Activated naive CD8-positive, alpha-beta T cell treated with anti-CD3 and anti-CD28 coated beads, Interleukin-2, amount 10 ng/mL, durations not matched to agents 7 days and 5 days (primary cell): ENCODE measurements at regions of chr20 and their contacts with region 1.

Region 1: GRCh38 chr20:36605399-36606157 is at the start of gene RAB5IF:
- DNase-seq: peak; percentile 99
- ATAC-seq: peak; percentile 93
- H3K4me3 Mint-ChIP-seq: peak within 1 kb of the TSS; percentile 98
- H3K27ac Mint-ChIP-seq: peak within 1 kb of the TSS; percentile 98
- H3K4me1 Mint-ChIP-seq: peaks cover 24% of the 10 kb centered on the region
- H3K27me3 Mint-ChIP-seq: no peaks in the 10 kb centered on the region
- total RNA-seq, gene RAB5IF: 73.1 to 76.1 TPM

Region 2: DNA sequence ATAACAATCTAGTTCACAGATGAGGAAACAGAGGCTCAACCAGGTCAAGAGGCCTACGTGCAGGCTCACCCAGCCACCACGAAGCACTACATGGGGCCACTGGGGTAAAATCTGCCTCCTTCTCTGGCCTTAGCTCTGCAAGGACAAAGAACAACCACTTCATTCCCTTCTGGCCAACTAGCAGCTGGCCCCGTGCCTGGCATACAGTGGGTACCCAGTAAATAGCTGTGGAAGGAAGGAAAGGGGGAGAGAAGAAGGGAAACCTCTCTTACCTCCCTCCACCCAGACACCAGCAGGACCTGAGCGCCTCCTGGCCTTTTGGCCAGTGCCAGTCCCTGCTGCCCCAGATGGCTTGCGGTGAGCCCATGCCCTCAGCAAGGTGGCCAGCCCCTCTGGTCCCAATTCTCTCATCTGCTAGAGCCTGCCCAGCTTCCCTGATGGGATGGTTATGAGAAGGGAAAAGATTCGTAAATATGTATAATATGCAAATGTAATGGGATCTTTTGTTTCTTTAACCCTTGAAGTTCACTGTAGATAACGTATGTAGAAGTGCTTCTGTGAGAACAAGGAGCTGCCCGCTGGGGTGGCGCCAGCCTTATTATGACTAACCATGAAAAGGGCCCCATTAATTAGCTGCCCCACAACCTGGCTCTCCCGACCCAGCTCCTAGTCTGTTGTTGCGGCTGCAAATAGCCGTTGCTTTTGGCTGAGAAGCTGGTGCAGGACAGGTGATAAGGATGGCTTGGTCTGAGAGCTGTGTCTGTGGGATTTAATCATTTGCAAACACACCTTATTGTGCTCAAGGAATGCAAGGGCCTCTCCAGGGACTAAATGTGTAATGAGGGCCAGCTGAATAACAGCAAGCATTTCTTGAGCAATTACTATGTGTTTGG is 237.4 kb before region 1 on chr20:
- POLR2A ChIA-PET with region 1: no interaction called
- DNase-seq: no peak
- ATAC-seq: no peak
- H3K4me3 Mint-ChIP-seq: no peak overlapping the region
- H3K27ac Mint-ChIP-seq: no peak overlapping the region
- H3K4me1 Mint-ChIP-seq: no peaks in the 10 kb centered on the region
- H3K27me3 Mint-ChIP-seq: peaks cover 2% of the 10 kb centered on the region

Region 3: GRCh38 chr20:36493013-36493800 is 112.4 kb before region 1 on chr20:
- POLR2A ChIA-PET with region 1: interaction called, 11 read pairs
- DNase-seq: no peak
- ATAC-seq: no peak
- H3K4me3 Mint-ChIP-seq: no peak overlapping the region
- H3K27ac Mint-ChIP-seq: peak overlapping the region; percentile 40
- H3K4me1 Mint-ChIP-seq: peaks cover 28% of the 10 kb centered on the region
- H3K27me3 Mint-ChIP-seq: no peaks in the 10 kb centered on the region

Region 4: DNA sequence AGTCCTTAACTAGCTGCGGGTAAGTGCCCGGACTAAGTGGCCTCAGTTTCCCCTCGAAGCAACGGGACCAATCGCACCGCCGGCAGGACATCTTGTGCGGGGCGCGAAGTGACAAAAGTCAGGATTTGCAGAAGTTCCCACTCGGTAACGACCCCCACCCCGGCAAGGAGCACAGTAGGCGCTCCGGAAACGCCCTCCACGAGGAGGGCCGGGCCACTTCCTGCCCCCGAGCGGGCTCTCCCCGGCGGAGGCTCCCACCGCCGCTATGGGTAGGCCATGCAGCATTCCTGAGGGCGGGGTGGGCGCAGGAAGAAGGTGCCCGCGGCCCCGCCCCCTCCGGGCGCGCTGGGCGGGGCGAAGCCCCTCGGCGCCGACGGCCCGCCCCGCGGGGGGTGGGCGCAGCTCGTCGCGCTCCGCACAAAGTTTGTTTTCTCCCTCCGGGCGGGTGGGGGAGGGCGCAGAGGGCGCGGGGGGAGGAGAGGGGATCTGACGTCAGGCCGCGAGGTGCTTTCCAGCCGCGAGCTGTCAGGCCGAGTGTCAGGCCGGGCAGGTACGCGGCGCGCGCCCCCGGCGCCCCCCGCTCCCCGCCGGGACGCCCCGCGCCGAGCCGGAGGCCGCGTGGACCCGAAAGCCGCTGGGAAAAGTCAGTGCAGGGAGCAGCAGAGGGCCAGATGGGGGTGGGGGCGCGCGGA is 32.3 kb before region 1 on chr20 and contains the start of gene TGIF2:
- POLR2A ChIA-PET with region 1: interaction called, 195 read pairs
- DNase-seq: peak; percentile 96
- ATAC-seq: peak; percentile 82
- H3K4me3 Mint-ChIP-seq: peak within 1 kb of the TSS; percentile 94
- H3K27ac Mint-ChIP-seq: peak within 1 kb of the TSS; percentile 97
- H3K4me1 Mint-ChIP-seq: peaks cover 32% of the 10 kb centered on the region
- H3K27me3 Mint-ChIP-seq: no peaks in the 10 kb centered on the region
- total RNA-seq, gene TGIF2: 32.2 to 33.1 TPM

Region 5: GRCh38 chr20:36591854-36592641 is 13.5 kb before region 1 on chr20:
- POLR2A ChIA-PET with region 1: interaction called, 50 read pairs
- DNase-seq: peak; percentile 41
- ATAC-seq: peak; percentile 51
- H3K4me3 Mint-ChIP-seq: peak overlapping the region; percentile 37
- H3K27ac Mint-ChIP-seq: peak overlapping the region; percentile 78
- H3K4me1 Mint-ChIP-seq: peaks cover 41% of the 10 kb centered on the region
- H3K27me3 Mint-ChIP-seq: no peaks in the 10 kb centered on the region

Region 6: GRCh38 chr20:36624068-36624943 is 18.7 kb after region 1 on chr20:
- POLR2A ChIA-PET with region 1: interaction called, 16 read pairs
- DNase-seq: no peak
- ATAC-seq: peak; percentile 22
- H3K4me3 Mint-ChIP-seq: no peak overlapping the region
- H3K27ac Mint-ChIP-seq: peak overlapping the region; percentile 81
- H3K4me1 Mint-ChIP-seq: peaks cover 38% of the 10 kb centered on the region
- H3K27me3 Mint-ChIP-seq: no peaks in the 10 kb centered on the region

Region 7: GRCh38 chr20:36629719-36630681 is 24.4 kb after region 1 on chr20:
- POLR2A ChIA-PET with region 1: interaction called, 16 read pairs
- DNase-seq: peak; percentile 71
- ATAC-seq: peak; percentile 95
- H3K4me3 Mint-ChIP-seq: peak overlapping the region; percentile 78
- H3K27ac Mint-ChIP-seq: peak overlapping the region; percentile 93
- H3K4me1 Mint-ChIP-seq: peaks cover 49% of the 10 kb centered on the region
- H3K27me3 Mint-ChIP-seq: no peaks in the 10 kb centered on the region